A549 (cell line): ENCODE measurements at regions of chr15 and their contacts with region 1.

Region 1: DNA sequence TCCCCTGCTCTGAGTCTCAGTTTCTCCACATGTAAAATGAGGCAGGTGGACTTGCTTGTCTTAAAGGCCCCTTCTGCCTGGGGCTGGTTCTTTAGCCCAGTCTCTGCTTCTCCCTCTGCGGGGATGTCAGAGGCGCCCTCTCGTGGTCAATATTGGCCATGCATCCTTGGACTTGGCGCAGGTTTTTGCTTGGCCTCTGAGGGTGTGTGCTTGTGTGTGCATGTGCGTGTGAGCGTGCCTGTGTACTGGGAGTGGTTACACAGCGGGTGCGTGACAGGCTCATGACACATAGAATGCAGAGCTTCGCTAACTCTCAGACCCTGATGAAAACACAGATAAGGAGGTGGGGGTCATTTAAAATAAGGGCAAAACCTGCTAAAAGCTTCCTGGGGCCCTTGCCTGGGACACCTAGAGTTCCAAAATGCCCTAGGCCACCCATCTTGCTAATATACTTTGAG is 160.9 kb downstream of the SMAD6 start:
- DNase-seq: peak; percentile 87 to 90
- ATAC-seq: peak; percentile 85 to 97
- H3K4me3 ChIP-seq: no peak overlapping the region
- H3K27ac ChIP-seq: peak overlapping the region; percentile 1 to 66; a peak in 4 of 6 replicates
- H3K4me1 ChIP-seq: peaks cover 17% of the 10 kb centered on the region
- CTCF ChIP-seq: peak; percentile 98
- EP300 ChIP-seq: no peak
- POLR2A ChIP-seq: no peak
- RAD21 ChIP-seq: peak; percentile 83 to 87

Region 2: GRCh38 chr15:66830358-66830757 is 32.5 kb before region 1 on chr15:
- CTCF ChIA-PET with region 1: interaction called, 13 read pairs
- POLR2A ChIA-PET with region 1: no interaction called
- DNase-seq: peak in 1 of 2 experiments; percentile 32
- ATAC-seq: peak; percentile 71 to 87
- H3K4me3 ChIP-seq: no peak overlapping the region
- H3K27ac ChIP-seq: peak overlapping the region in 1 of 2 experiments; percentile 56; a peak in 3 of 6 replicates
- H3K4me1 ChIP-seq: peaks cover 8% of the 10 kb centered on the region
- CTCF ChIP-seq: no peak
- EP300 ChIP-seq: no peak
- POLR2A ChIP-seq: no peak
- RAD21 ChIP-seq: no peak

Region 3: DNA sequence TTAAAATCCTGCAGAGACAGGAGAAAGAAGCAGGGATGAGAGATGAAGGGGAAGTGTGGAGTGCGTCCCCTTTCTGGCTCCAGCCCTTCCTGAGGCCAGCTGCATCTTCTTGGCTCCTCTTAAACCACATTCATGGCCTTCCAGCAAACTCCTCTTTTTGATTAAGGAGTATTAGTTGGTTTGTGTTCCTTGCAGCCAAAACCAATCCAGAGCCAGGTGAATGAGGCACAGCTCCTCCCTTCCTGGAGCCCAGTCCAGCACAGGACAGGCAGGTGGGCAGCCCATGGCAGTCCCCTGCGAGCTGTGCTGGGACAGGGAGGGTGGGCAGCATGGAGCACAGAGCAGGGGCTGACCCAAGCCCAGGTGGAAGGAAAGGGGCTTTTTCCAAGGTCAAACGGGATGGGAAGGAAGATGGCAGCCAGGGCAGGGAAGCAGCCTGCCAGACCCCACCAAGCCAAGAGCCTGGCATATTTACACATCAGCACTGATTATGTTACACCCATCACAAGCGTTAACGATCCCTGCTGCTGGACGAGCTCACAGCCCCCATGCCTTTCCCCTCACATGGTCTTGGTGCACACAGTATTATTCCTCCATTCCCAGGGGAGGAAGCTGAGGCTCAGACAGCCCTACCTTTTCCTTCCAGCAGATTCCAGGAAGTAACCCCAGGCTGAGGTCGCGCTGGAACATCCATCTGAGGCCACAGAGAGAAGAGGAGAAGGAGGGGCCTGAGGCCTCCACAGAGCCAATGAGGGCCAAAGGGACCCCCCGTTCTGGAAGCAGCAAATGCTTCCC is 14.8 kb after region 1 on chr15:
- CTCF ChIA-PET with region 1: interaction called, 42 read pairs
- POLR2A ChIA-PET with region 1: no interaction called
- DNase-seq: no peak
- ATAC-seq: no peak
- H3K4me3 ChIP-seq: no peak overlapping the region
- H3K27ac ChIP-seq: peak overlapping the region in 1 of 2 experiments; percentile 64; a peak in 3 of 6 replicates
- H3K4me1 ChIP-seq: peaks cover 30% of the 10 kb centered on the region
- CTCF ChIP-seq: no peak
- EP300 ChIP-seq: no peak
- POLR2A ChIP-seq: no peak
- RAD21 ChIP-seq: no peak

Region 4: GRCh38 chr15:66921319-66921915 is 58.5 kb after region 1 on chr15:
- CTCF ChIA-PET with region 1: no interaction called
- POLR2A ChIA-PET with region 1: no interaction called
- DNase-seq: no peak
- ATAC-seq: no peak
- H3K4me3 ChIP-seq: no peak overlapping the region
- H3K27ac ChIP-seq: no peak overlapping the region
- H3K4me1 ChIP-seq: no peaks in the 10 kb centered on the region
- CTCF ChIP-seq: no peak
- EP300 ChIP-seq: no peak
- POLR2A ChIP-seq: no peak
- RAD21 ChIP-seq: no peak

Region 5: DNA sequence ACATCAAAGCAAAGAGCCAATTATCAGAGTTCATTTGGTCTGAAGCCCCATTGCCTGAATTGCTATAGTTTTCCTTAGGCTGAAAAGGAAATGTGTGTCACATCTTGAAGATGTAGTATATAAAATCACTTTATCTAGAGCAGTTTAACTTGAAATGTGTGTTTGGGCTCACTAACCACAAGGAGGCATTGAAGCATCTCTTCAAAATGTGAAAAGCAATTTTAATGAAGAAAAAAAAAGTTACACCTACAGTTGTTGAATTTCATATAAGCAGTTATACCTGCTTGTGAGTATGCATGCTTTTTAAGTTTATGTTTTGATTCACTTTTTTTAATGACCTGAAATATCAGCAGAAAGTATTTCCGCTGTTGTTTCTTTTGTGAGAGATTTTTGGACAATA is 521.0 kb after region 1 on chr15:
- CTCF ChIA-PET with region 1: no interaction called
- POLR2A ChIA-PET with region 1: no interaction called
- DNase-seq: peak in 1 of 2 experiments; percentile 35
- ATAC-seq: no peak
- H3K4me3 ChIP-seq: no peak overlapping the region
- H3K27ac ChIP-seq: no peak overlapping the region
- H3K4me1 ChIP-seq: no peaks in the 10 kb centered on the region
- CTCF ChIP-seq: peak; percentile 29; the same call in 2 of the 3 replicates
- EP300 ChIP-seq: no peak
- POLR2A ChIP-seq: no peak
- RAD21 ChIP-seq: peak; percentile 46 to 61; a peak in 3 of 5 replicates